GM10248 (cell line): ENCODE measurements at regions of chr4 and their contacts with region 1.

Region 1: DNA sequence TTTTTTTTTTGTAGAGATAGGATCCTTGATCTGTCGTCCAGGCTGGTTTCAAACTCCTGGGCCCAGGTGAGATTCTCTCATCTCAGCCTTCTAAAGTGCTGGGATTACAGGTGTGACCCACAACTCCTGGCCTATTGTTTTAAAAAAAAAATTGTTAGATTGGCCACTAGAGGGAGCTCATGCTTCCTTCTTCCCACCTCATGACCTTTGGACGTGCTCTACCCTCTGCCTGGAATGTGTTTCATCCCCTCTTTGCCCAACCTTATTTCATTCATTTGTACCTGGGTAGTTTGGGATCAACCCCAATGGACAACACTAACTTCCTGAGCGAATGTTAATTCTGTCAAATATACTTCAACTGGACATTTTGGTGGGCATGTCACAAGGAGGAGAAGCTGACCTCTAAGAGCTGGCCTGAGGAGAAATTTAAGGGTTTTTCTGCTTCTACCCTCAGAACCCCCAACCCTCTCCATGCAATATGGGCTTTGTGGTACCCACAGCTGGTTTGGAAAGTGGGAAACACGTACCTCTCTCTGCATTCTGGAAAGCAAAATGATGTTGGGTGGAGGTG is 6.4 kb downstream of the PPEF2 start:
- DNase-seq: peak; percentile 57
- CTCF ChIP-seq: peak; percentile 52

Region 2: GRCh38 chr4:75876218-75876617 is 19.6 kb before region 1 on chr4:
- CTCF ChIA-PET with region 1: interaction called, 12 read pairs
- POLR2A ChIA-PET with region 1: no interaction called
- DNase-seq: no peak
- CTCF ChIP-seq: no peak

Region 3: DNA sequence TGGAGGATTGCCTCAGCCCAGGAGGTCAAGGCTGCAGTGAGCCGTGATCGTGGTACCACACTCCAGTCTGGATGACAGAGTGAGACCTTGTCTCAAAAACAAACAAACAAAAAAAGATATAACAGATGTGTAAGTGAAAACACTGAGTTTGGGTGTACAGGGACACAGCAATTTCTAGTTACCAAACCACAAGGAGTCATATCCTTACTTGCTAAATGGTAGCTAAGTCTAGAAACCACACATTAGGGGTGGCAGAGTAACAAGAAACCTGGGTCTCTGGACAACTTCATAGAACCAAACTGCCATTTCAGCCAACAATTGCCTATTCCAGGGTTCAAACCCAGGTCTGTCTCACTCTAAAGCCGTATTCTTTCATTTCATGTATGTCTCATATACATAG is 14.4 kb before region 1 on chr4:
- CTCF ChIA-PET with region 1: interaction called, 12 read pairs
- POLR2A ChIA-PET with region 1: no interaction called
- DNase-seq: no peak
- CTCF ChIP-seq: no peak

Region 4: DNA sequence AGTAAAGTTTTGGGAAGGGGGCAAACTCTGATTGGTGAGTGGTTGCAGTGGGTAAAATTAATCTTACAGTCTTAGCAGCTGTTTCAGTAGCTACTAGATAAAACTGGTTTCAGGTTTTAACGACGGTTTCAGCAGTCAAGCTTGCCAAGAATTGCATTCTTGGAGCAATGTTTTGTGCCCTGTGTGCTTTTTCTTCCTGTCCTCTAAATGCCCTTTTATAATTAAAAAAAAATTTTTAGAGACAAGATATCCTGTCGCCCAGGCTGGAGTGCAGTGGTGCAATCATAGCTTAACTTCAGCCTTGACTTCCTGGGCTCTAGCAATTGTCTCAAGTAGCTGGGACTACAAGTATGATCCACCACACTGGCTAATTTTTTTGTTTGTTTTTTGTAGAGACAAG is 12.7 kb after region 1 on chr4:
- CTCF ChIA-PET with region 1: interaction called, 88 read pairs
- POLR2A ChIA-PET with region 1: no interaction called
- DNase-seq: no peak
- CTCF ChIP-seq: no peak

Region 5: DNA sequence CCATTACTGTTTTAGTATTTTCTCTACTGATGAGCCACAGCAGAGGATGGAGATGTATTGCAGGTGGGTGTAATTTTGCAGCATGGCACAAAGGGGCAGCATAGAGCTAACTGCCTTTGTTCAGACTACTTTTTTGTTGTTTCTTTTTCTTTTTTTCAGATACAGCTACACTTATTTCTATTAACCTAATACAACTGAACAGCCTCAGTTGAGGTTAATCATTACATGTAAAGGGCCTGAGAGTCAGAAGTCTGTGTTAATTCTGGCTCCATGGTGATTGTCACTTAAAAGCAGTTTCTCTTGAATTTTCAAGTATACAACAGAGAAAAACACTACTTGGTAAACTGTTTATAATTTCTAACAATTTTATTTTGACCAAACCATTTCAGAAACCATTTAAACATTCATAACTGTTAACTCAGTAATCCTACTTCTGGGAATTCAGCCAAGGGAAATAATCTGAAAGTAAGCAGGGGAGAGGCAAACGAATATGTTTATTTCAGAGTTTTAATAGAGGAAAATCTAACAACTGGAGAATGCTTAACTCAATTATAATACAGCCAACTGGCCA is 20.3 kb after region 1 on chr4:
- CTCF ChIA-PET with region 1: interaction called, 59 read pairs
- POLR2A ChIA-PET with region 1: no interaction called
- DNase-seq: peak; percentile 65
- CTCF ChIP-seq: peak; percentile 73

Region 6: GRCh38 chr4:76061982-76062381 is 166.2 kb after region 1 on chr4:
- CTCF ChIA-PET with region 1: interaction called, 15 read pairs
- POLR2A ChIA-PET with region 1: no interaction called
- DNase-seq: peak; percentile 53
- CTCF ChIP-seq: no peak

Region 7: DNA sequence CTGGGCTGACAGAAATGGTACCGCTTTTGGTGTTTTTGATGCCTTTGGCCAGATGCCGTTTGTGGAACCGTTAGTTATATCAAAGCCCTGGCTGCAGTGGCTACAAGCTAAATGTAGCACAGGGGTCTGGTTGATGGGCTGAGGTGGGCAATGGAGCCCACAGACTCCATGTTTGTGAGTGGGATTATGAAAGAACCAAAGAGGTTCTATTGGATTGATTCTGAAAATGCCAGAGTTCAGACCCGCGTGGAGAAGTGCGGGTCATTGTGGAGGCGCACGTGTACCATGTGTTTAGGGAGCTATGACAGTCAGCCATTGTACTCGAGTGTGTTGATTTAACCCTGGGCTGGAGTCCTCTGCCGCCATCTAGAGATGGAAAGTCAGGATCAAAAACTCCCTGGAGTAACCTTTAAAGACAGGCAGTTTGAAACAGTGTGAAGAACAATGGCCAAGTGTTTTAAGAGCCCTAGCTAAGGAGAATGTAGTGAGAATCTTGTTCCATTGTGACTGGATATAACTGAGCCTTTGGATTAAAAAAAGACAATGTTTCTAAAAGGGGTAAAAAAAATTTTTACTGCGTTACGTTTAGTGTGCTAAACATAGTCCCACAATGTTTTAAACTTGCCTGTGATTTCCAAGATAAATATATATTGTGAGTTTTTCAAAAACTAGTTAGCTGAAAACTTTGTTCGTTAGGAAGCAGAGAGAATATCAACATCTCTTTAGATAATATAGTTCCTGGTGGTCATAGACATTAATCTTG is 191.4 kb after region 1 on chr4:
- CTCF ChIA-PET with region 1: interaction called, 11 read pairs
- POLR2A ChIA-PET with region 1: no interaction called
- DNase-seq: peak; percentile 31
- CTCF ChIP-seq: peak; percentile 21

Region 8: DNA sequence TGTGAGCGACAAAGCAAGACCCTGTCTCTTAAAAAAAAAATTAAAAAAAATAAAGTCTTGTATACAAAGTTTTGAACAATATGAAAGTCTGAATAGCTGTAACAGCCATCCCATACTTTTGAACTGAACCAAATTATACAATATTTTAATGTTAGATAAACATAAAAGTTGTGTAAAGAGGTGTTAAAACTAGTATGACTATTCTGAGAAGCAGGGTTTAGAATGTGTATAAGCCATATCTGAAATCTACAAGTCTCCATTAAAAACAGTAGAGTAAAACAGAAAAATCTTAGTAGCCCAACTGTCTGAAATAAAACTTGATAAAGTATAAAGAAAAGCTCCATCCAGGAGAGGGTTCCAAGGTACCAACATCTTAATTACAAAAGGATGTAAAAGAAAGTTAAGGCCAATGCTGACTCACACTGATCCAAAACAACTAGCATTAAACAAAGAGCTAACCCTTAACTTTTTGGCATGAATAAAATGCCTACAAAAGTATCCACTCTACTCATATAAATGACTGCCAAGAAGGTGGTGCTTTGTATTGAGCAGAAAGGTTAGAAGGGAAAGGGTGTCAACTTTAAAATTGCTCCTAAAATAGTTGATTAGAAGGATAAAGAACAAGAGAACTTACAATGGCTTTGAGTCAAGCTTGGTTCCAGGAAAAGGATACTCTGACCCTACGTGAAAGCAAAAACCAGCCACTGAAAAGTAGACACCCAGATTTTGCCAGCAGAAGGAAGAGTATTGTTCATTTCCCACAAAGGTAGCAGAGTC is 1904.8 kb after region 1 on chr4:
- CTCF ChIA-PET with region 1: no interaction called
- POLR2A ChIA-PET with region 1: no interaction called
- DNase-seq: no peak
- CTCF ChIP-seq: no peak